ENCODE measurements at regions of chr10 and their contacts with region 1.

Region 1: GRCh38 chr10:8130973-8131911 is 76.8 kb downstream of the GATA3 start:
- DNase-seq: peak; percentile 84
- H3K4me3 Mint-ChIP-seq: peak overlapping the region; percentile 22
- H3K27ac Mint-ChIP-seq: peak overlapping the region; percentile 75
- H3K4me1 Mint-ChIP-seq: peaks cover 46% of the 10 kb centered on the region
- H3K27me3 Mint-ChIP-seq: peaks cover 4% of the 10 kb centered on the region

Region 2: GRCh38 chr10:7901256-7901655 is 230.0 kb before region 1 on chr10:
- intact Hi-C with region 1: no loop called
- DNase-seq: no peak
- H3K4me3 Mint-ChIP-seq: no peak overlapping the region
- H3K27ac Mint-ChIP-seq: no peak overlapping the region
- H3K4me1 Mint-ChIP-seq: peaks cover 4% of the 10 kb centered on the region
- H3K27me3 Mint-ChIP-seq: no peaks in the 10 kb centered on the region

Region 3: GRCh38 chr10:8065651-8066050 is 65.6 kb before region 1 on chr10:
- intact Hi-C with region 1: loop called (anchors 1 kb)
- DNase-seq: peak; percentile 62
- H3K4me3 Mint-ChIP-seq: peak overlapping the region; percentile 77
- H3K27ac Mint-ChIP-seq: peak overlapping the region; percentile 82
- H3K4me1 Mint-ChIP-seq: peaks cover 81% of the 10 kb centered on the region
- H3K27me3 Mint-ChIP-seq: no peaks in the 10 kb centered on the region

Region 4: GRCh38 chr10:8245131-8245813 is 114.0 kb after region 1 on chr10:
- intact Hi-C with region 1: loop called (anchors 1 kb)
- DNase-seq: peak; percentile 77
- H3K4me3 Mint-ChIP-seq: peak overlapping the region; percentile 67
- H3K27ac Mint-ChIP-seq: peak overlapping the region; percentile 88
- H3K4me1 Mint-ChIP-seq: peaks cover 55% of the 10 kb centered on the region
- H3K27me3 Mint-ChIP-seq: no peaks in the 10 kb centered on the region

Region 5: GRCh38 chr10:8321990-8322389 is 190.7 kb after region 1 on chr10:
- intact Hi-C with region 1: loop called (anchors 1 kb)
- DNase-seq: no peak
- H3K4me3 Mint-ChIP-seq: no peak overlapping the region
- H3K27ac Mint-ChIP-seq: no peak overlapping the region
- H3K4me1 Mint-ChIP-seq: peaks cover 30% of the 10 kb centered on the region
- H3K27me3 Mint-ChIP-seq: peaks cover 2% of the 10 kb centered on the region

Region 6: GRCh38 chr10:9024210-9024609 is 893.0 kb after region 1 on chr10:
- intact Hi-C with region 1: loop called (anchors 10 kb)
- DNase-seq: no peak
- H3K4me3 Mint-ChIP-seq: no peak overlapping the region
- H3K27ac Mint-ChIP-seq: peak overlapping the region; percentile 85
- H3K4me1 Mint-ChIP-seq: peaks cover 11% of the 10 kb centered on the region
- H3K27me3 Mint-ChIP-seq: peaks cover 9% of the 10 kb centered on the region